Activated B cell treated with CpG ODN at 0.5 μM for 24 hours (primary cell): ENCODE measurements at regions of chr12 and their contacts with region 1.

Region 1: DNA sequence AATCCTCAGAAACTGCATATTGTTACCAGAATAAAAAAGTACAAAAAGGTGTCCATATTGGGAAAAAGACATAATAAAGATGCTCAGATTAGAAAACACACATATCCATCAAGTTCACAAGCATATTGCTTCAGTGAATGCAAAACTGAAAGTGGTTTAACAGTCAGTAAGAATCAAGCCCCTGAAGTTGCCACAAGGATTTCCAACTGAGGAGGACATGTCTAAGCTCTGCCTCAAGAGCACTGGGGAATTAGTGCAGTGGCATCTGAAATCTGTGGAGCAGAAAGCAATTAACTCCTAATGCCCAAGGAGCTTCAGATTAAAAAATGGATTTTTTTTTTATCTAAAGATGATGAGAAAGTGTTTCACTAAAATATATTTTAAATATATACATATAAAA is 113.2 kb downstream of the DENND5B start:
- DNase-seq: no peak
- ATAC-seq: no peak
- H3K4me3 Mint-ChIP-seq: no peak overlapping the region
- H3K27ac Mint-ChIP-seq: peak overlapping the region; percentile 16
- H3K4me1 Mint-ChIP-seq: peaks cover 62% of the 10 kb centered on the region
- H3K27me3 Mint-ChIP-seq: no peaks in the 10 kb centered on the region
- CTCF ChIP-seq: no peak

Region 2: DNA sequence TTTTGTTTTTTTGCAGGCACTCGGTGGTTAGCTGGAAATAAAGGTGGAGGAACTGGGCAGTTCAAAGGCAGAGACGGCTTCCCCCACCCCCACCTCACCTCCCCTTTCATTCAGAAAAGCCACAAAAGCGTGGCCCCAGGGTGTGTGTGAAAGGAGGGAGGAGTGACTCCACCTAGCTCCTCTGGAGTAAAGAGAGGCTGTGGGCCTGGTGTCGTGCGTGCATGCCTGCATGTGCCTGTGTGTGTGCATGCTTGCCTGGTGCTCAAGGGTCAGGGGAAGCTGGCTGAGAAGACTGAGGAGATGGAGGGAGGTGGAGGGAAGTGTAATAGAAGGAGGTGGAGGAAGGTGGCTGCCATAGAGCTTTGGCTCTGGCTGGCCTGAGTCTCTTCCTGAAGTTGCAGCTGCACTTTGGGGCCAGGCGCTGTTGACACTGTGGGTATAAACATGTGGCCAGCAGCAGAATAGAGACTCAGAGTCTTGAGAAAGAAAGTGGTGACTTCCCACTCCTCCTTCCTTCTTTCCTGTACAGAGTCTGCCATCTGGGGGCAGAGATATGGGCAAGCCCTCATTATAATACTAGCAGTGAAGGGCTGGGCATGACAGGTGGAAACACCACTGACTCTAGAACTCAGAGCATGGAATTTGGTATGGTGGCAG is 114.8 kb before region 1 on chr12:
- CTCF ChIA-PET with region 1: no interaction called
- POLR2A ChIA-PET with region 1: no interaction called
- intact Hi-C with region 1: no loop called
- DNase-seq: no peak
- ATAC-seq: peak; percentile 81
- H3K4me3 Mint-ChIP-seq: peak overlapping the region; percentile 58
- H3K27ac Mint-ChIP-seq: peak overlapping the region; percentile 47
- H3K4me1 Mint-ChIP-seq: peaks cover 19% of the 10 kb centered on the region
- H3K27me3 Mint-ChIP-seq: no peaks in the 10 kb centered on the region
- CTCF ChIP-seq: no peak

Region 3: DNA sequence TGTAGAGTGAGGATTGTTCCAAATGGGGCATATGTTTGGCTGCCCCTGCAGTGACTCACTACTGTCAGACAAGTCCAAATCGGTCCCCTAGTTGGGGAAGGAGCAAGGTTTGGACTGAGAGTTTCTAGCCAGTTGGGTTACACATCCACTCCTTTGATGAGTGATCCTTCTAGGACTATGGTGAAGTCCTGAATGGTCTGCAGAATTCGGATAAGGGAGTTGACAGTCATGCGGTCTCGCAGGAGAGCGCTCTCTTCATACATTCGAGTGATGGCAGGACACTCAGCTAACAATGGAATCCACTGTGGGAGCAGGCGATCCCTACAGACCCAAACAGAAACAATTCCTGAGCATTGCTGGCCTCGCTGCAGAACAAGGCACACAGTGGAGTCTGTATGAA is 90.2 kb before region 1 on chr12:
- CTCF ChIA-PET with region 1: no interaction called
- POLR2A ChIA-PET with region 1: no interaction called
- intact Hi-C with region 1: no loop called
- DNase-seq: no peak
- ATAC-seq: no peak
- H3K4me3 Mint-ChIP-seq: no peak overlapping the region
- H3K27ac Mint-ChIP-seq: no peak overlapping the region
- H3K4me1 Mint-ChIP-seq: no peaks in the 10 kb centered on the region
- H3K27me3 Mint-ChIP-seq: no peaks in the 10 kb centered on the region
- CTCF ChIP-seq: no peak

Region 4: GRCh38 chr12:31456562-31456961 is 21.1 kb before region 1 on chr12:
- CTCF ChIA-PET with region 1: no interaction called
- POLR2A ChIA-PET with region 1: no interaction called
- intact Hi-C with region 1: no loop called
- DNase-seq: no peak
- ATAC-seq: no peak
- H3K4me3 Mint-ChIP-seq: no peak overlapping the region
- H3K27ac Mint-ChIP-seq: no peak overlapping the region
- H3K4me1 Mint-ChIP-seq: peaks cover 12% of the 10 kb centered on the region
- H3K27me3 Mint-ChIP-seq: no peaks in the 10 kb centered on the region
- CTCF ChIP-seq: no peak

Region 5: DNA sequence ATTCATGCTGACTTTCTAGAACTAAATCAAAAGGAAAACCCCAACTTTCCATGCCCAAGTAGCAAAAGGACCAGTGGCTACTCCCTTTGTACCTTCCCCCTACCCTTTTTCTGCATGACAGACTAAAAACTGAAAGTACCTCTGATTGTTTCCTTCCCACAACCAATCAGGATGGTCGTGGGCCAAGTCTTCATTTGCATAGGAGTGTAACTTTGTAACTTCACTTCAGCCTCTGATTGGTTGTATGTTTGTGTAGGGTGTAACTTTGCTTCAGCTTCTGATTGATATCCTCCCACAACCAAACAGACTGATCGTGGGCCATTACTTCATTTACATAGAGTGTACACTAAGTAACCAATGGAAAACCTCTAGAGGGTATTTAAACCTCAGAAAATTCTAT is 16.8 kb after region 1 on chr12:
- CTCF ChIA-PET with region 1: no interaction called
- POLR2A ChIA-PET with region 1: no interaction called
- intact Hi-C with region 1: loop called (anchors 2 kb)
- DNase-seq: no peak
- ATAC-seq: no peak
- H3K4me3 Mint-ChIP-seq: no peak overlapping the region
- H3K27ac Mint-ChIP-seq: no peak overlapping the region
- H3K4me1 Mint-ChIP-seq: peaks cover 42% of the 10 kb centered on the region
- H3K27me3 Mint-ChIP-seq: no peaks in the 10 kb centered on the region
- CTCF ChIP-seq: no peak

Region 6: GRCh38 chr12:31510034-31510433 is 32.3 kb after region 1 on chr12:
- CTCF ChIA-PET with region 1: no interaction called
- POLR2A ChIA-PET with region 1: no interaction called
- intact Hi-C with region 1: loop called (anchors 5 kb)
- DNase-seq: no peak
- ATAC-seq: no peak
- H3K4me3 Mint-ChIP-seq: no peak overlapping the region
- H3K27ac Mint-ChIP-seq: no peak overlapping the region
- H3K4me1 Mint-ChIP-seq: peaks cover 52% of the 10 kb centered on the region
- H3K27me3 Mint-ChIP-seq: no peaks in the 10 kb centered on the region
- CTCF ChIP-seq: no peak

Region 7: DNA sequence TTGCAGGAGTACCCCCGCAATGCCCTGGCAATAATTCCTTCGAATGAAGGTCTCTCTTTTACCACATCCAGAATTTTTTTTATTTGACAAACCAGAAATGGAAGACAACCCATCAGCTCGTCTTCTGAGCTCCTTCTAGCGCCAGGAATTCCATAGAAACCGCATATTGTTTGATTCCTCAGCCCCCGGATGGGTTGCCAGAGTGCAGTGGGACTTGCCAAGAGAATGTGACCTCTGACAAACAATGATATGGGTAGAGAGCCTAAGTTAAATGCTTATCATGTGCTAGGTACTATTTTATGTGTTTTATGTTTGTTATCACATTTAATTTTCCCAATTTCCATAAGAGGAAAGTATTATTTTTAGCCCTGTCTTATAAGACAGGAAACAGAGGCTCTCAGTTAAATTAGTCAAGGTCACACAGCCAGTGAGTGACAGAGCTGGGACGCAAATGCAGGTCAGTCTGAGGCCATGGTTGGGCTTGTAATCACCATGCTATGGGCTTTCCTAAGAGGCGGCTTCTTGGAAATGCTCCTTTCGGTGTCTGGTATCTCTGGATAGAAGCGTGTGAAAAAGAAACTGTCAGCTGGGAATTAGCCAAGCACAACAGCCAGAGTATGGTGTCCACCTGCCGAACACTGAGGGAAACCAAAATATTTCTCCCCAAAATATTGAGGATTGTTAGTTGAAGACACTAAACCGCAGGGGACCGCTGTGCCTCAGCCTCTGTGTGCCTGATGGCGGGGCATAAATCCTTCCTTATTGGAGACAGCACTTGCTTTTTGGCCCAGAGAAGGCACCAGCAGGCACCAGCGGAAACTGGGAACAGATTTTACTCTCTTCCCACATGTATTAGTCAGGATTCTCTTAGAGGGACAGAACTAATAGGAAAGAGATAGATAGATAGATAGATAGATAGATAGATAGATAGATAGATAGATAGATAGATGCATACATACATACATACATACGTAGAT is 152.4 kb after region 1 on chr12:
- CTCF ChIA-PET with region 1: no interaction called
- POLR2A ChIA-PET with region 1: no interaction called
- intact Hi-C with region 1: loop called (anchors 5 kb)
- DNase-seq: no peak
- ATAC-seq: no peak
- H3K4me3 Mint-ChIP-seq: no peak overlapping the region
- H3K27ac Mint-ChIP-seq: peak overlapping the region; percentile 2
- H3K4me1 Mint-ChIP-seq: peaks cover 27% of the 10 kb centered on the region
- H3K27me3 Mint-ChIP-seq: no peaks in the 10 kb centered on the region
- CTCF ChIP-seq: no peak

Region 8: DNA sequence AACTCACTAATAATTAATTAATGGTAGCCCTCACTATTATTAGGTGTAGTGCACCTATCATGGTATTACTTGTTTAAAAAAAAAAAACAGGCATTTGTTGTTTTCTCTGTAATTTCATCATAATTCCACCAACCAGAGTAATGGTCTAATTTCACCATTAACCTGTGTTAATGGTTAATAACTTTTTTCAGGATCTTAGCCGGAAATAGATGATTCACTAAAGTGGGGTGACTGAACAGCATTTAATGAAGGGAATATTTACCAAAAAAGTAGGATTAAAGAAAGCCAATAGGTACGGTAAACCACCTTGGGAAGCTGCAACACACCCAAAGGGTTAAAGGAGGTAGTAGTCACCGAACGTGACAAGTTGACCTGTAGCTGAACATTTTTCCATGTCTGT is 194.8 kb after region 1 on chr12:
- CTCF ChIA-PET with region 1: no interaction called
- POLR2A ChIA-PET with region 1: no interaction called
- intact Hi-C with region 1: no loop called
- DNase-seq: no peak
- ATAC-seq: no peak
- H3K4me3 Mint-ChIP-seq: no peak overlapping the region
- H3K27ac Mint-ChIP-seq: no peak overlapping the region
- H3K4me1 Mint-ChIP-seq: no peaks in the 10 kb centered on the region
- H3K27me3 Mint-ChIP-seq: no peaks in the 10 kb centered on the region
- CTCF ChIP-seq: no peak